ENCODE measurements at regions of chr2 and their contacts with region 1.

Region 1: GRCh38 chr2:86079981-86080911 is 25.4 kb downstream of the POLR1A start:
- DNase-seq: peak; percentile 93
- ATAC-seq: peak; percentile 85
- H3K4me3 Mint-ChIP-seq: no peak overlapping the region
- H3K27ac Mint-ChIP-seq: peak overlapping the region; percentile 88
- H3K4me1 Mint-ChIP-seq: peaks cover 35% of the 10 kb centered on the region
- H3K27me3 Mint-ChIP-seq: no peaks in the 10 kb centered on the region

Region 2: DNA sequence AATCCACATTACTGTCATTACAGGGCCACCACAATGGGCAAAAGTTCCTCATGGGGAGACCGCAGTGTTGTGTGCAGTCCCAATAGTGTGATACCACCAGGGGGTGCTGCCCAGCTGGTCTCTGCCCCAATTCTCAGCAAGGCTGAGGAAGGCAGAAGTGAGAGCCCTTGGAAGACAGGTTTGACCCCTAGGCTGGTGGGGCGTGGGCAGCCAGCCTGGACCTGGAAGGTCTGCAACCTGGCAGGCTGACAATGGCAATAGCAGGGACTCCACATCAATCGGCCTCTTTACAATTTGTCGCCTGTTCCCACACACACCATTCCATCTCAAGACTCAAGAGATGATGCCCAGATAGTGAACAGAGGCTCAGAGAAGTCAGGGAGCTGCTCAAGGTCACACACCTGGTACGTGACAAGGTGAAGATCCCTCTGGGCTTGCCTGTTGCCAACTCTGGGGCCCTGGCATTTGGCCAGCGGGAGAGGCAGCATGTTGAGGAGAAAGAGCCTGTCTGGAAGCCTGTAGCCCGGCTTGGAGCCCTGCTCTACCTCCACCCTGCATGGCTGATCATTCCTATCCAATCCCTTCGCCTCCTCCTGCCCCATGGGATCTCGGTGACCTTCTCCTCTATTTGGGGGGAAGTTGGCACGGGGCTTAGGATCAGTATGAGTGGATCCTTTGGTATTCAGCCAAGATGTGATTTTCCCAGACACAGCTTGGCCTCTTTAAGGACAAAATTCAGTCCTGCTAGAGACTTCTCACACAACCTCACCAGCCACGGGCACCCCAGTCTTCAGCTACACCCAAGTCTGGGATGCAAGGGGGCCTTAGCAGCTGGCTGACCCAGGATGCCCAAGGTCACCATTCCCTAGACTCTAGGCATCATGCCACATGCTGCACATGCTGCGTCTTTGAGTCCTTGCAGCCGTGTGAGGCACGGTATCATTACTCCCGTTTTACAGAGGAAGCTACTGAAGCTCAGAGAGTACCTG is 329.4 kb before region 1 on chr2:
- CTCF ChIA-PET with region 1: interaction called, 26 read pairs
- DNase-seq: peak; percentile 72
- ATAC-seq: peak; percentile 45
- H3K4me3 Mint-ChIP-seq: no peak overlapping the region
- H3K27ac Mint-ChIP-seq: no peak overlapping the region
- H3K4me1 Mint-ChIP-seq: peaks cover 13% of the 10 kb centered on the region
- H3K27me3 Mint-ChIP-seq: peaks cover 75% of the 10 kb centered on the region

Region 3: DNA sequence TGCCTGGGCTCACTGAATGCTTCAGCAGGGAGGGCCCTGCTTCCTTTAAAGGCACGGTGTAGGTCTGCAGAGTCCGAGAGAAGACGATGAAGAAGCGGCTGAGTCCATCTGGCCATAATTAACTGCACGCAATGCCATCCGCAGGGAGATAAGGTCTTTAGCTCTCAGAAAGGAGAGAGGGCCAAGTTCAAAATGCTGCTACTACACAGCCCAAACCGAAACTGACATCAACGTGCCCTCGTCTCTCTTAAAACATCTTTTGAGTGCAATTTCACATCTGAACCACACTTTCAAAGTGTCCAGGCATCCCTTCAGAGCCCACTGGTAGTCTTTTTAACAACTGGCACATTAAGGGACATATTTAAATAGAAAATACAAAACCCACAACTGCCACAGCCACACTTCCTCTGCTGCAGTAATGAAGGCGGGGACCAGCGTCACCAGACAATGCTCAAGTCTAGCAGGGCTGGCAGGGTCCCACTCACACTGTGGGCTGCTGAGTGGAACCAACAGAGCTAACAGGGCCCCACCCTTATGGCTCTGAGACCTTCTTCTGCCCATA is 227.2 kb before region 1 on chr2:
- CTCF ChIA-PET with region 1: interaction called, 43 read pairs
- DNase-seq: peak; percentile 89
- ATAC-seq: peak; percentile 85
- H3K4me3 Mint-ChIP-seq: peak overlapping the region; percentile 82
- H3K27ac Mint-ChIP-seq: peak overlapping the region; percentile 99
- H3K4me1 Mint-ChIP-seq: peaks cover 76% of the 10 kb centered on the region
- H3K27me3 Mint-ChIP-seq: no peaks in the 10 kb centered on the region

Region 4: GRCh38 chr2:85971366-85971765 is 108.9 kb before region 1 on chr2:
- CTCF ChIA-PET with region 1: no interaction called
- DNase-seq: no peak
- ATAC-seq: no peak
- H3K4me3 Mint-ChIP-seq: no peak overlapping the region
- H3K27ac Mint-ChIP-seq: no peak overlapping the region
- H3K4me1 Mint-ChIP-seq: peaks cover 8% of the 10 kb centered on the region
- H3K27me3 Mint-ChIP-seq: peaks cover 5% of the 10 kb centered on the region

Region 5: DNA sequence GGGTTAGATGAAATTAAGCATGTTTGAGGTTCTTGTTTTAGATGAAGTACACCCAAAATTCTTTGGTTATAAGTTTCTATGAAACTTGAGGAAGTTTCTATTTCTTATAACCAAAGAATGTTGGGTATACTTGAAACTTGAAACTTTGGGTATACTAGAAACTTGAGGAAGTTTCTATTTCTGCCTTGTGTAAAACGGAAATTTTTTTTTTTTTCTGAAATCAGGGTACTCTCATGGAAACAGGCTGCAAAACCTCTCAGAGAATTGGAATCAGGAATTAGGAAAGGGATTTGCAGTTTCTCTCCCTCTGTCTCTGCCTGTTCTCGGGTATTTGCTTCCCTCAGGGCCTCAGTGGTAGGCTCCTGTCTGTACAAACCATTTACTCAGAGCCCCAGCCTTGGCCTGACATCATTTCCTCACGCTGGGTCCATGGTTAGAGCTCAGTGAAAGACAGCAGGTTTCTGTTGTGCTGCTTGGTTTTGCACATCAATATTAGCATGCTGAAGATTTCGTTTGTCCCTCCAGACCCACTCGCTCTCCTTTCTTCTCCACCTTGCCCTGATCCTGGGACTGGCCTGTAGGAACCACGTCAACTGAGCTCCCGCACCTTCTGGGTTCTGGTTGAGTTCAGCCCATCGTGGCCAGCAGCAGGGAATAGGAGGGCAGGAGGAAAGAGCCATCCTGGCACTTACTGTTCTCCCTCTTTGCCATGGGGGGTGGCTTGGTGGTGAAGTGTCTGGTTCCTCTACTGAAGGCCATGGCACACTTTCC is 81.0 kb before region 1 on chr2:
- CTCF ChIA-PET with region 1: interaction called, 13 read pairs
- DNase-seq: peak; percentile 85
- ATAC-seq: peak; percentile 92
- H3K4me3 Mint-ChIP-seq: peak overlapping the region; percentile 56
- H3K27ac Mint-ChIP-seq: peak overlapping the region; percentile 95
- H3K4me1 Mint-ChIP-seq: peaks cover 72% of the 10 kb centered on the region
- H3K27me3 Mint-ChIP-seq: no peaks in the 10 kb centered on the region

Region 6: DNA sequence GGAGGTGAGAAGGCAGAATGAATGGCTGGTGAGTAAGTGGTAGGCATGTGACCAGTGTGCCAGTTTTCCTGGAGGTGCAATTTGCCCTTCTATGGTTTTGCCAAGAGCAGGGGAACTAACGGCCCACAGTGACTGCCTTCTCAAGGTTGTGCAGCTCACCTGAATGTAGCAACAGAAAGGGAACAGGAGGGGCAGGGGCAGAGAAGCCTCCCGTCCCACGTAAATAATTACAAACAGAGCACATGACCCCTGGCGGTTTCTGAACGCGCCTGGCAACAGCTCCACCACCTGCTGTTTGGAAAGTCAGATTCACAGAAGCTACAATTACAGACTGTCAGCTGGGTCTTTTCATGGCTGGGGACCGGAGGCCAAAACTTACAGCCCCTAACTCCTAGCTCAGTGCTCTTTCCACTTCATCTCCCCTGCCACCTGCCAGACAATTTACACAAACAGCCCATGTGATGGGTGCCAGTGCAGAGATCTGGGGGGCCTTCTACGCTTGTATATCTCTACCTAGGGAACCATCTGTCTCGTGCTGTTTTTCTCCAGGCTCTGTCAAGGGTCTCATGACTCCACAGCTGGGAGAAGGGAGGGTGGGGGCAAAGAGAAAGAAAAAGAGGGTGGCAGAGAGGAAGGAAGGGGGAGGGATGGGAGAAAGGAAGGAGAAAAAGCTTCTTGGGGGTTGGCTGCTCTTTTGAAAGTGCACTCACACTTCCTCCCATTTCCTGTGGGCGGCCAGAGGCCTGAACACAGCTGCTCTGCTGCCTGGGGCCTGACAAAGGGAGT is 44.2 kb before region 1 on chr2:
- CTCF ChIA-PET with region 1: interaction called, 43 read pairs
- DNase-seq: peak; percentile 89
- ATAC-seq: peak; percentile 48
- H3K4me3 Mint-ChIP-seq: peak overlapping the region; percentile 63
- H3K27ac Mint-ChIP-seq: peak overlapping the region; percentile 95
- H3K4me1 Mint-ChIP-seq: peaks cover 72% of the 10 kb centered on the region
- H3K27me3 Mint-ChIP-seq: no peaks in the 10 kb centered on the region

Region 7: DNA sequence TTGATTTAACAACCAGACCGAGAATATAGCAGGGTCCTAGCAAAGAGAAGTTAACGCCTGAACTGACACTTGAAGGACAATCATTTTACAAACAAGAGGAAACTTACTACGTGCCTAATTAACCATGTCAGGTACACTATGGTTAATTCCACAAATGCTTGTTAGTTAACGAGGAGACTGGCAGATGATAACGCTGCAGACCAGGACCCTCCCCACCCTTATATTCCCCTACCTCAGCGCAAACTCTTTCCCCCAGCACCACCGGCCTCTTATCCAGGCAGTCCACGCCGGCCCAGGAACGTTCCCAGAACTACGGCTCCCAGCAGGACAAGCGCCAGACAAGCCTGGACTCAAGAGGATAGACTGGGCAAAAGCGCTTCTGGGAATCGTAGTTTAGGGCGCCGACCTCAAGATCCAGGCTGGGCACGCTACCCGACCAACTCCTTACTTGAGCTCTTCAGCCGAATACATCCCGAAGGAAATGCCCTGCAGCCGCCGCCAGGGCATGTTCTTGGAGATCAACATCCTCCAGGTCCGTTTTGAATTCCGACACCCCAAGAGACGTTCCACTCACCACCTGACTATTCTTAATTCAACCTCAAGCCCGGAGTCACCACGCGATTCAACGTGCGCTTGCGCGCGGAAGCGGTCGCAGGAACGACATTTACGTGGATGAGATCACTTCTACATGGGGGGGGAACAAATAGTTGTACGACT is 25.2 kb after region 1 on chr2 and contains the start of gene POLR1A:
- CTCF ChIA-PET with region 1: interaction called, 10 read pairs
- DNase-seq: peak; percentile 92
- ATAC-seq: peak; percentile 77
- H3K4me3 Mint-ChIP-seq: peak within 1 kb of the TSS; percentile 93
- H3K27ac Mint-ChIP-seq: peak within 1 kb of the TSS; percentile 97
- H3K4me1 Mint-ChIP-seq: peaks cover 56% of the 10 kb centered on the region
- H3K27me3 Mint-ChIP-seq: no peaks in the 10 kb centered on the region
- total RNA-seq, gene POLR1A: 38.2 to 51.2 TPM

Region 8: GRCh38 chr2:86420913-86421312 is 340.7 kb after region 1 on chr2:
- CTCF ChIA-PET with region 1: no interaction called
- DNase-seq: no peak
- ATAC-seq: no peak
- H3K4me3 Mint-ChIP-seq: no peak overlapping the region
- H3K27ac Mint-ChIP-seq: no peak overlapping the region
- H3K4me1 Mint-ChIP-seq: no peaks in the 10 kb centered on the region
- H3K27me3 Mint-ChIP-seq: peaks cover 43% of the 10 kb centered on the region